ENCODE measurements at regions of chr9 and their contacts with region 1.

Region 1: DNA sequence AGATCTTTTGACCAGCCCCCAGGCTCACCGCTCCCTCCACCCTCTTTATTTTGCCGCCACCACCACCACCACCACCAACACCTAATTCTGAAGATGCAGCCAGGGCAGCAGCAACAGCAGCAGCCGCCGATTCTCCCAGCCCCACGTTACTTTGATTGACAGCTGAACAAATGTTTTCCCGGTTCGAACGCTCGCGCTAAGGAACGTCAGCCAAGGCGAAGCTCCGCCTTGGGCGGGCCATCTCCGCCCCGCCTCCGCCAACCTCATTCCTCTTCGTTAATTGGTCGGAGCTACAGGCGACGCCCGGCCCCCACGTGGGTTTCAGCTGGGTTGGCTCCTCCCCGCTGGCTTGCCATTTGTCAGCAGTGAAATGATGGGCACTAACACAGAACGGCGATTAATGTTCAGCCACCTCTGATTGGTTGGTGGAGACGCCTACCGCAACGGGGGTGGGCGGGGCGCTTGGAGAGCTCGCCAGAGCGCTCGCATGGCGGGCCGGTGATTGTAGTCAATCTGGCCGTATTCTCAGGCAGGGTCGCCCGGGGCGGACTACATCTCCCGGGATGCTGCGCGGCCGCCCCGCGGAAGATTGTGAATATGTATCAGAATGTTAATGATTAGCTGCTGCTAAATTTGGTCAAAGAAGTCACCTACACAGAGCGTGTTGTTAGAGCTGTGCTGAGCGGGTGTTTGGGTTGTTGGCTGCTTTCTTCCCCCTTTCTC is at the start of gene TLE4:
- DNase-seq: peak; percentile 100
- ATAC-seq: peak; percentile 88
- H3K4me3 Mint-ChIP-seq: no peak within 1 kb of the TSS
- H3K27ac Mint-ChIP-seq: peak within 1 kb of the TSS; percentile 69
- H3K4me1 Mint-ChIP-seq: peaks cover 28% of the 10 kb centered on the region
- H3K27me3 Mint-ChIP-seq: peaks cover 4% of the 10 kb centered on the region
- CTCF ChIP-seq: no peak
- total RNA-seq, gene TLE4: 30.8 to 31.9 TPM

Region 2: GRCh38 chr9:79477955-79478771 is 93.3 kb before region 1 on chr9:
- CTCF ChIA-PET with region 1: interaction called, 3 read pairs
- POLR2A ChIA-PET with region 1: no interaction called
- intact Hi-C with region 1: loop called (anchors 5 kb)
- DNase-seq: peak; percentile 61
- ATAC-seq: peak; percentile 89
- H3K4me3 Mint-ChIP-seq: no peak overlapping the region
- H3K27ac Mint-ChIP-seq: peak overlapping the region; percentile 72
- H3K4me1 Mint-ChIP-seq: peaks cover 16% of the 10 kb centered on the region
- H3K27me3 Mint-ChIP-seq: no peaks in the 10 kb centered on the region
- CTCF ChIP-seq: peak; percentile 52

Region 3: DNA sequence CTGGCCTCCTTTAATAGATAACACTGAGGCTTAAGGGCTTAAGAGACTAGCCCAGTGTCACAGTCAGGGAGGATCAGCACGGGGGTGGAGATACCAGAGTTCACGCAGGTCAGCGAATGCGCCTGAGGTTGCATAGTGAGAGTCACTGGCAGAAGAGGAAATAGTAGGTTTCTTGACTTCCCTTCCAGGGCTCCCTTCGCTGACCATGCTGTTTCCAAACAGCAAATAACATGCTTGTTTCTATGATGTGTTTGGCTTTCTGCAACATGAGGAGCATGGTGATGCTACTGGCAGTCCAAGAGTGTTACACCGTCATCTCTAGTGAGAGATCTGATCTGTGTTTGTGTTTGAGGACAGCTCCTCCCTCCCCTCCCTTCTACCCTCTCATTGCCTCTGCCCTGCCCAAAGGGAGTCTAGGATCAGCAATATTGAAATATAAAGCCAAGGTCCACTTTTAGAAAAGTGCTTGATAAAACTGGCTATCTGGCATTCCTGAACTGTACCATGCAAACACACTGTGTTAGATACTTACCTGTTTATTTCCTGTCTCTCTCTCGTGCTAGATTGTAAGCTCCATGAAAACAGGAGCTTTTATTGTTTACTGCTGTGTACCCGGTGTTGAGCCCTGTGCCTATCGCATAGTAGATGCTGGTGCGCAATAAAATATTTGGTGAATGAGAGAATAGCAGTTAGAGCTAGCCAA is 12.6 kb after region 1 on chr9:
- CTCF ChIA-PET with region 1: interaction called, 4 read pairs
- POLR2A ChIA-PET with region 1: interaction called, 32 read pairs
- intact Hi-C with region 1: no loop called
- DNase-seq: peak; percentile 75
- ATAC-seq: peak; percentile 84
- H3K4me3 Mint-ChIP-seq: peak overlapping the region; percentile 25
- H3K27ac Mint-ChIP-seq: peak overlapping the region; percentile 50
- H3K4me1 Mint-ChIP-seq: peaks cover 67% of the 10 kb centered on the region
- H3K27me3 Mint-ChIP-seq: no peaks in the 10 kb centered on the region
- CTCF ChIP-seq: no peak

Region 4: GRCh38 chr9:79630521-79631403 is 59.3 kb after region 1 on chr9:
- CTCF ChIA-PET with region 1: no interaction called
- POLR2A ChIA-PET with region 1: interaction called, 17 read pairs
- intact Hi-C with region 1: loop called (anchors 2 kb)
- DNase-seq: no peak
- ATAC-seq: peak; percentile 77
- H3K4me3 Mint-ChIP-seq: peak overlapping the region; percentile 39
- H3K27ac Mint-ChIP-seq: peak overlapping the region; percentile 88
- H3K4me1 Mint-ChIP-seq: peaks cover 83% of the 10 kb centered on the region
- H3K27me3 Mint-ChIP-seq: no peaks in the 10 kb centered on the region
- CTCF ChIP-seq: no peak

Region 5: DNA sequence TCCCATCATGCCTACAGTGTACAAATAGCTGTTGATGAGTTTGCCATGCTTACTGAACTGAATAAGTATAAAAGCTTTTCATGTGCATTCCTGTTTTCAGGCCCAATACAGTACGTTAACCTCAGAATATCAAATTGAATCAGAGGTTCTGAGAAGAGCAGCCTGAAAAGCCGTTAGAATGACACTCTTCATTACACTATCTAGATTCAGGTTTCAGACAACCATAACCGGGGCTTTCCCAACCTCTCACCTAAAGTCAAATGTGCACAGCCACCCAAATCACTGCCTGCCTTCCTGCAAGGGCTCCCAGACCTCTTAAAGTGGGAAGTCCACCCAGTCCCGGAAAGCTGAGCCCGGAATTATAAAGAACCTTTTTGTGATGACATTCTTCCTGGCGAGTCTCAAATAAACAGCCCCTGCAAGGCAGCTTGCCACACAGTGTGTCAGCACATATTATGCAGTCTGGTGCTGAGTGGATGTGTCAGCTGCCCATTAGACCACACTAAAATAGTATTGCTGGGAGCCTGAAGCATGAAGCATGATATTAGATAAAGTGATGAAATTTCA is 246.1 kb after region 1 on chr9:
- CTCF ChIA-PET with region 1: no interaction called
- POLR2A ChIA-PET with region 1: interaction called, 3 read pairs
- intact Hi-C with region 1: loop called (anchors 10 kb)
- DNase-seq: peak; percentile 33
- ATAC-seq: peak; percentile 78
- H3K4me3 Mint-ChIP-seq: no peak overlapping the region
- H3K27ac Mint-ChIP-seq: no peak overlapping the region
- H3K4me1 Mint-ChIP-seq: peaks cover 22% of the 10 kb centered on the region
- H3K27me3 Mint-ChIP-seq: no peaks in the 10 kb centered on the region
- CTCF ChIP-seq: no peak

Measured in activated CD8-positive, alpha-beta T cell treated with anti-CD3 and anti-CD28 coated beads for 36 hours (primary cell).